ENCODE measurements at regions of chr16 and their contacts with region 1.

Region 1: DNA sequence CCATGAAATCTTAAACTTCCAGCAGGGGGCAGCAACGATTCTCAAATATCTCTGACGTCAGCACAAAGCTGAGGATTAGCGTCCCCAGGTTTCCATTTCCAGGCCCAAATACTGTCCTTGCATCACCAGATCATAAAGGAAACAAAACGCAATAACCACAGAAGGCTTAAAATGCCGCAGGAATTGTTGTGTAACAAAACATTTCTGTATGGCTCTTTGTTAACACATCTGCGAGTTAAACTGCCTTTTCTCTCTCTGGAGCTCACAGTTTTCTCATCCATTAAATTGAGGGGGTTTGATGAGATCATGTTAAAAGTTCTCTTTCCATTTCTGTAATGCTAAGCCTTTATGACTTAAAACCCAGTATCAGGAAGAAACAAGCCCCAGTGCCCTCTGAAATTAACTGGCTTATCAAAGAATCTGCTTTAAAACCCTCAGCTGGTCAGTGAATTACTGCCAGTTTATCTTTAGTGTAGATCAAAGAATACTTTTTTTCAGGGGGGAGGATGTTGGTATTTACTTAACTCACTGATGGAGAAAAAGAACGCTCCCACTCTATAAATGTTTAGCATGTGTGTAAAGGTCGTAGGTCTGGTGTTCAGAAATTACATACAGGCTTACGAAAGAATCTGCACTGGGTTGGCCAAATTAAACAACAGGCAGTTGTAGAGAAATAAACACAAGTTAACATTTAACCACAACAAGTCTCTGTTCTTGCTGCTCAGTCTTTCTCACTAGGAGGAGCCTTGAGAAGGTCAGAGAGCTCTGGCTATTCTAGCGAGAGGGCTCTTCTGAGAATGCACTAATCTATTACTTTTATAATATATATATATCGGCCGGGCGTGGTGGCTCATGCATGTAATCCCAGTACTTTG is 10.6 kb upstream of the TERF2 start:
- DNase-seq: peak; percentile 85
- H3K4me3 ChIP-seq: no peak overlapping the region
- H3K27ac ChIP-seq: peak overlapping the region; percentile 56
- H3K4me1 ChIP-seq: peaks cover 36% of the 10 kb centered on the region
- H3K27me3 ChIP-seq: peaks cover 0 to 1% of the 10 kb centered on the region in 2 experiments
- CTCF ChIP-seq: peak; percentile 39 to 54
- POLR2A ChIP-seq: no peak

Region 2: DNA sequence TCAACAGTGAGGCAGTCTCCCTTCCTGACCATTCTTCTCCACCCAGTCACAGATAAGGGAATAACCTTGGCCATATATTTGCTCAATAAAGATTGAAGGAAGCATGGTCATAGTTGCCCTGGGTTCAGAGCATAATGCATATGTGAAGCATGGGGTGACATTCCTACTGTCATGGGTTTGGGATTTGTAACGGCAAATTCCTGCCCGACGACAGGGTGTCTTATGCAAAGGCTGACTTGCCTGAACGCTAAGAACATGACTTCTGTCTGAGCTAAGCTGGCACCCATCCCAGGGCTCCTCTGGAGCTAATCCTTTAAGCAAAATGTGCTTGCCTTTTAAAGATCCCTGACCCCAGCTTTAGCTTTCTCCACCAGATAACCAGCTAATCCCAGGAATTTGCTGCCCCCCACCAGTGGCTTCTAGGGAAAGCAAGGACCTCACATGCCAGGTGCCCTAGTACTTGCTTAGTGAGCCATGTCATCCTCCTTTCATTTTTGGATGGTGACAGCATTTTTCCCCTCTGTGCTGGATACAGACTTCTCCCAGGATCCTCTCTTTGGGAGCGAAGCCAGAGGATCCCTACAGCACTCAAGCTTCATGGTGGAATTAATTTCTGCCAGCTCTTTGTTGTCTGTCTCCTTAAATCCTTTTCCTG is 1097.4 kb before region 1 on chr16:
- CTCF ChIA-PET with region 1: no interaction called
- POLR2A ChIA-PET with region 1: no interaction called
- dilution Hi-C with region 1: no loop called
- intact Hi-C with region 1: no loop called
- DNase-seq: no peak
- H3K4me3 ChIP-seq: no peak overlapping the region
- H3K27ac ChIP-seq: no peak overlapping the region
- H3K4me1 ChIP-seq: no peaks in the 10 kb centered on the region
- H3K27me3 ChIP-seq: no peaks in the 10 kb centered on the region
- CTCF ChIP-seq: no peak
- POLR2A ChIP-seq: peak; percentile 62

Region 3: GRCh38 chr16:69410285-69410990 is 14.0 kb after region 1 on chr16:
- CTCF ChIA-PET with region 1: interaction called, 24 read pairs
- POLR2A ChIA-PET with region 1: no interaction called
- dilution Hi-C with region 1: no loop called
- intact Hi-C with region 1: no loop called
- DNase-seq: peak; percentile 95
- H3K4me3 ChIP-seq: peak overlapping the region in 1 of 3 experiments; percentile 23
- H3K27ac ChIP-seq: peak overlapping the region; percentile 81
- H3K4me1 ChIP-seq: peaks cover 17% of the 10 kb centered on the region
- H3K27me3 ChIP-seq: no peaks in the 10 kb centered on the region
- CTCF ChIP-seq: no peak
- POLR2A ChIP-seq: peak; percentile 70

Region 4: DNA sequence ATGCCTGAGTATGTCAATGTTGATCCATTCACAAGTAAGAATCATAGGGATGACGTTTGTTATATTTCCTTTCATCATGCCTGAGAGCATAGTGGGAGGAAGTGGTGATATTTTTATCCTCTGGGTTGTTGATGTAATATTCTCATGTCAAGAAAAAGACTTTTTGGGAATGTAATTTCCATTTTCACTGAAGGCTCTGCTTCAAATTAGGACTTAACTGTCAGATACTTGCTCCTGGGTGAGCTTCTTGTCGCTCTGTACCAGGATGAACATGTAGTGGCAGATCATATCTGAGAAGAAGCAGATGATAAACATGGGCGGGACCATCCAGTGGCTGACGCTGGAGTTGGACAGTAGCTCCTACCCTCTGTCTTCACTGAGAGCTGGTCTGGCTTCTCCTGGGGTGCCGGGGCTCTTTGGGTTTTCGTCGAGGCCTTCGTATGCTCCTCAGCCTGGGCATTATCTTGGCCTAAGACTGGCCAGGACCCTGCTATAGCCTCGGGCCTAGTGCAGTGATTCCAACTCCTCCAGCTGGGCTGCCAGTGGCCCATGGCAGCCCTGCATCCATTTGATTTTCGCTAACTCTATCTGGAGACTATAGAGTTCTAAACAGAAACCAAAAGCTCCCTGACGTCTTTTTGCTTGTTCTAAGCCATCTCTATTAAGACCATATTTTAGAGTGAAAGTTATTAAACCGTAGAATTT is 47.7 kb after region 1 on chr16:
- CTCF ChIA-PET with region 1: interaction called, 49 read pairs
- POLR2A ChIA-PET with region 1: no interaction called
- dilution Hi-C with region 1: no loop called
- intact Hi-C with region 1: no loop called
- DNase-seq: peak; percentile 61
- H3K4me3 ChIP-seq: no peak overlapping the region
- H3K27ac ChIP-seq: peak overlapping the region; percentile 64
- H3K4me1 ChIP-seq: peaks cover 13% of the 10 kb centered on the region
- H3K27me3 ChIP-seq: no peaks in the 10 kb centered on the region
- CTCF ChIP-seq: no peak
- POLR2A ChIP-seq: no peak

Region 5: DNA sequence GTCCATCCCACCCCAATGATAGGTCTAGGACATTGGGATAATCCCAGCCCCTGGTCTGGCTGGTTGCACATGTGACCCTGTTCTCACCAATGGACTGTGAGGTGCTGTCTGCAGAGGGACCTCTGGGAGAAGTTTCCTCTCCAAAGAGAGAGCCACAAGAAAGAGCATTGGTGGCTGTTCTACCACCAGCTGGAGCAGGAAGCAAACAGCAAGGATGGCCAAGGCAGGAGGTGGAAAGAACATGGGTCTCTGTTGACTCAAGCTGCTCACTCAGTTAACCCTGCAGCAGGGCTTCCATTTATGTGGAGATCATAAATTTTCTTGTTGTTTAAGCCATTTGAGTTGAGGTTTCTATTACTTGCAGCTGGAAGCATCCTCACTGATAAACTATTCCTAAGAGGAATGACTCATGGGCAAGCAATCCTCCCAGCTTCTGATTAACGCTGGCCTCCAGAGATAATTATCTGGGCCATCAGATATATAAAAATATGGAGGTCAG is 80.5 kb after region 1 on chr16:
- CTCF ChIA-PET with region 1: interaction called, 38 read pairs
- POLR2A ChIA-PET with region 1: interaction called, 3 read pairs
- dilution Hi-C with region 1: no loop called
- intact Hi-C with region 1: loop called (anchors 1 kb)
- DNase-seq: peak; percentile 84
- H3K4me3 ChIP-seq: no peak overlapping the region
- H3K27ac ChIP-seq: peak overlapping the region; percentile 84
- H3K4me1 ChIP-seq: peaks cover 29% of the 10 kb centered on the region
- H3K27me3 ChIP-seq: no peaks in the 10 kb centered on the region
- CTCF ChIP-seq: no peak
- POLR2A ChIP-seq: no peak

Region 6: DNA sequence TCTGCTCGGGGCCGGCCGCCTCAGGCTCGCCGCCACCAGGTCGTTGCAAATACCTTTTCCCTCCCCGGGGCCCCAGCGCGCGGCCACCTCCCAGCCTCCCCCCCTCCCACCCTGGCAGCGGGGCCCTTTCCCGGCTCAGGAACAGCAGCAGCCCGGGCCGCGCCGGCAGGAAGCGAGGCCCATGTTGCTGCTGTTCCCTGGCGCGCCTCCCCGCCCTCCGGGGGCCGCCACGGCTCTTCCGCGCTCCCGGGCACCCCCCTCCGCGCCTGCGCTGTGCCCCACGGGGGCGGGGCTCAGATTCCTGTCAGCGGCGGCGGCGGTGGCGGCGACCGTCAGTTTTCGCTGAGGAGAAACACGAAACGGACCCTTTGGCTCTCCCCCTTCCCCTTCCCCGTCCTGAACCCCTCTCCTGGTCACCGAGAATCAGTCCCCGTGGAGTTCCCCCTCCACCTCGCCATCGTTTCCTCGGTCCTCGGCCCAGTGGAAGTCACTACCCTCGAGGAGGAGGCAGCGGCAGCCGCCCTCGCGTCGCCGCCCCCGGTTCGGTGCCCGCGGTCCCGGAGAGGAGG is 169.3 kb after region 1 on chr16 and contains the start of gene NFAT5:
- CTCF ChIA-PET with region 1: interaction called, 16 read pairs
- POLR2A ChIA-PET with region 1: no interaction called
- dilution Hi-C with region 1: no loop called
- intact Hi-C with region 1: loop called (anchors 1 kb)
- DNase-seq: peak; percentile 94
- H3K4me3 ChIP-seq: peak within 1 kb of the TSS; percentile 84 to 95 (median 93)
- H3K27ac ChIP-seq: peak within 1 kb of the TSS; percentile 83
- H3K4me1 ChIP-seq: peaks cover 31% of the 10 kb centered on the region
- H3K27me3 ChIP-seq: no peaks in the 10 kb centered on the region
- CTCF ChIP-seq: no peak
- POLR2A ChIP-seq: peak; percentile 77
- total RNA-seq, gene NFAT5: 42.0 and 49.5 TPM in 2 replicates

Region 7: DNA sequence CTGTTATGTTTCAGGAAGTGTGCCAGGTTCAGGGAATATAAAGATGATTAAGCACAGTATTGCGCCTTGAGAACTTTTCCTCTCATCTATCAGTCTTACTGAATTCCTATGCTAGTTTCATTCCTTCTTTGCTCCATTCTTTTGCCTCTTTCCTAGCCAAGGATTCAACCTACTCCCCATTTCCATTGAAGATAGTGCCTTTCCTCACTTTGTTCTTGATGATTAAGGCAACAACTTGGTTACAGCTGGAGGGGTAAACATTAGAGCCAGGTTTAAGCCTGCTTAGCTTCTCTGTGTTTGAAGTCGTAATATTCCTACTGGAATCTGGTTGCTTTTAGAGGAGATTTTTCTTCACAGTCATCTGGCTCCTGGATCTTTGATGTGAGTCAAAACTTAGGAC is 254.8 kb after region 1 on chr16:
- CTCF ChIA-PET with region 1: interaction called, 11 read pairs
- POLR2A ChIA-PET with region 1: no interaction called
- dilution Hi-C with region 1: no loop called
- intact Hi-C with region 1: no loop called
- DNase-seq: no peak
- H3K4me3 ChIP-seq: no peak overlapping the region
- H3K27ac ChIP-seq: no peak overlapping the region
- H3K4me1 ChIP-seq: no peaks in the 10 kb centered on the region
- H3K27me3 ChIP-seq: no peaks in the 10 kb centered on the region
- CTCF ChIP-seq: no peak
- POLR2A ChIP-seq: no peak

Region 8: DNA sequence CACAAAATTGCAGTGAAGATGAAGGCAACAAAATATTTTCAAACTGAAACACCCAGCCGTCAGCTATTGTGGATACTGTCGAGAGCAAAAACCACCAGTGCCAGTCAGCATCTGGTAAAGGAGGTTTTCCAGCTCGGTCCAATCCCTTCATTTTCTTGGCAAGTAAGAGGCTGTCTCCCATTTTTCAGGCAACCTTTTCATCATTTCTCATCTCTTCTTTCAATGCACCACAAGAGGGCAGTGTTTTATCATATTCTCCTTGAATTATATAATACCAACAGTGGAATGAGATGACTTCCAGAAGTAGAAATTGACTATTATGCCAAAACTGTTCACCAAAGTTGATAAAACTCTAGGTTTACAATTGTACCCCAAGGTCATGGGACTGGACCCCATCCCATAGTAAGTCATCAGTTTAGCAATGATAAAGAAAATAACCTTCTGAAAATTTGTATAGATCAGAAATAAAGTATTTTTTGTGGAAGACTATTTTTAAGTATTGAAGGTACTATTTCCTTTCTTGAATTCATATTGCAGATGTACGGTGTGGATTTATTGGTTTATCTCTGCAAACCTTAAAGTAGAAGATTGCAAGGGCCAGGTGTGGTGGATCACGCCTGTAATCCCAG is 313.1 kb after region 1 on chr16:
- CTCF ChIA-PET with region 1: interaction called, 10 read pairs
- POLR2A ChIA-PET with region 1: no interaction called
- dilution Hi-C with region 1: no loop called
- intact Hi-C with region 1: loop called (anchors 1 kb)
- DNase-seq: peak; percentile 71
- H3K4me3 ChIP-seq: no peak overlapping the region
- H3K27ac ChIP-seq: no peak overlapping the region
- H3K4me1 ChIP-seq: no peaks in the 10 kb centered on the region
- H3K27me3 ChIP-seq: no peaks in the 10 kb centered on the region
- CTCF ChIP-seq: peak; percentile 37 to 55
- POLR2A ChIP-seq: no peak